ENCODE measurements at regions of chr1 and their contacts with region 1.

Region 1: GRCh38 chr1:182446033-182446669 is 3.8 kb upstream of the RGSL1 start:
- DNase-seq: no peak
- ATAC-seq: peak; percentile 39

Region 2: GRCh38 chr1:182588500-182589452 is 142.6 kb after region 1 on chr1 and contains the start of gene RNASEL:
- intact Hi-C with region 1: loop called (anchors 5 kb)
- DNase-seq: peak; percentile 86
- ATAC-seq: peak; percentile 89
- total RNA-seq, gene RNASEL: 2.9 TPM

Region 3: GRCh38 chr1:182789138-182790076 is 343.3 kb after region 1 on chr1 and contains the start of gene NPL:
- intact Hi-C with region 1: loop called (anchors 2 kb)
- DNase-seq: peak; percentile 96
- ATAC-seq: peak; percentile 97
- total RNA-seq, gene NPL: 6.1 TPM

Region 4: GRCh38 chr1:182806015-182806678 is 360.0 kb after region 1 on chr1:
- intact Hi-C with region 1: no loop called
- DNase-seq: no peak
- ATAC-seq: no peak

Measured in Right ventricle myocardium inferior (tissue), 1 donor.